B cell (primary cell): ENCODE measurements at regions of chr10 and their contacts with region 1.

Region 1: DNA sequence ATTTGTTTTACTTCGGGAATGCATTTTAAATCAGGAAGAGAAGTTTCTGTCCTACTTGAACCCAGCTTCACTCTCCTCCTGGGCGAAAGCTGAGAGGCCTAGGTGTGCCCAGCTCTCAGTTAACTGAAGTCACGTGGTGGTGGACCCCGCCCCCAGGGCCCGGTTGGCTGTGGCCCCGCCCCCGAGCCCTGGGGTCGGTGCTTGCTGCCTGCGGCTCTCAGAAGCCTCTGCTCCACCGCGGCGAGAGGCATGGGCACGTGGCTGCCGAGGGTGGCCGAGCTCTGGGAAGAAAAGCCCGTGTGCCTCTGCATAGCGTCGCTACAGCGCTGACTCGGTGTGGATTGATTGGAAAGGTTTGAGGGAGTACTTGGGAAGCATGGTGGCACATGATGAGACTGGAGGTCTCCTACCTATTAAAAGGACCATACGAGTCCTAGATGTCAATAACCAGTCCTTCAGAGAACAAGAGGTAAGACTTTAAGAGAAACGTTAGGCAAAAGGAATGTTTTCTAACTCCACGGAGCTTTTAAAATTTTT is 34.1 kb downstream of the NET1 start:
- DNase-seq: peak; percentile 89
- ATAC-seq: peak; percentile 96
- H3K4me3 ChIP-seq: peak overlapping the region; percentile 45 to 76 (median 62)
- H3K4me3 Mint-ChIP-seq: peak overlapping the region; percentile 91
- H3K27ac ChIP-seq: peak overlapping the region; percentile 30 to 44
- H3K27ac Mint-ChIP-seq: peak overlapping the region; percentile 87
- H3K4me1 ChIP-seq: peaks cover 20 to 21% of the 10 kb centered on the region in 2 donors
- H3K4me1 Mint-ChIP-seq: peaks cover 47% of the 10 kb centered on the region
- H3K27me3 ChIP-seq: no peaks in the 10 kb centered on the region
- H3K27me3 Mint-ChIP-seq: no peaks in the 10 kb centered on the region
- CTCF ChIP-seq: no peak

Region 2: GRCh38 chr10:5412277-5412941 is 34.0 kb before region 1 on chr10 and contains the start of gene NET1:
- CTCF ChIA-PET with region 1: no interaction called
- POLR2A ChIA-PET with region 1: no interaction called
- intact Hi-C with region 1: loop called (anchors 2 kb)
- DNase-seq: peak; percentile 75
- ATAC-seq: peak; percentile 84
- H3K4me3 ChIP-seq: peak within 1 kb of the TSS; percentile 51 to 78 (median 67)
- H3K4me3 Mint-ChIP-seq: peak within 1 kb of the TSS; percentile 90
- H3K27ac ChIP-seq: no peak within 1 kb of the TSS
- H3K27ac Mint-ChIP-seq: no peak within 1 kb of the TSS
- H3K4me1 ChIP-seq: peaks cover 8 to 9% of the 10 kb centered on the region in 2 donors
- H3K4me1 Mint-ChIP-seq: peaks cover 4% of the 10 kb centered on the region
- H3K27me3 ChIP-seq: peaks cover 0 to 16% (median 3%) of the 10 kb centered on the region in 4 experiments
- H3K27me3 Mint-ChIP-seq: peaks cover 17% of the 10 kb centered on the region
- CTCF ChIP-seq: no peak
- total RNA-seq, gene NET1: 6.4 and 7.6 TPM in 2 replicates

Region 3: GRCh38 chr10:5434017-5434753 is 12.3 kb before region 1 on chr10:
- CTCF ChIA-PET with region 1: interaction called, 28 read pairs
- POLR2A ChIA-PET with region 1: no interaction called
- intact Hi-C with region 1: no loop called
- DNase-seq: no peak
- ATAC-seq: no peak
- H3K4me3 ChIP-seq: no peak overlapping the region
- H3K4me3 Mint-ChIP-seq: no peak overlapping the region
- H3K27ac ChIP-seq: no peak overlapping the region
- H3K27ac Mint-ChIP-seq: no peak overlapping the region
- H3K4me1 ChIP-seq: no peaks in the 10 kb centered on the region
- H3K4me1 Mint-ChIP-seq: no peaks in the 10 kb centered on the region
- H3K27me3 ChIP-seq: no peaks in the 10 kb centered on the region
- H3K27me3 Mint-ChIP-seq: no peaks in the 10 kb centered on the region
- CTCF ChIP-seq: peak; percentile 46

Region 4: DNA sequence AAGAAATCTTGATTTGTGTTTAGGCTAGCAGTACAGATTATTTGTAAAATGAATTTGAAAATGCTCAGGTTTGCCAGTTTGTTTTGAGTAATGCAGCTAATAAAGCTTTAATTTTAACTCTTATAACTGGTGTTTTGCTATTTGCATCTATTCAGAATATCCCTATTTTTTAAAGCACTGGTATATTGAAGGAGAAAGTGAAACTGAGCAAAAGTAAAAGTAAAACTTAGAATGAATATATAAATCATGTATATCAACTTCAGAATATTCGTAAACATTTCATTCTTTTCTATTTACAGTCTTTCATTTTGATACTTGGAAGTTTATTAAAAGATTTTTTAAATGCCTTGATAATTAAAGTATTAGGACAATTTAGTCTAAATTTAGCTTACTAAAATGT is 264.4 kb after region 1 on chr10:
- CTCF ChIA-PET with region 1: interaction called, 3 read pairs
- POLR2A ChIA-PET with region 1: no interaction called
- intact Hi-C with region 1: loop called (anchors 1 kb)
- DNase-seq: no peak
- ATAC-seq: no peak
- H3K4me3 ChIP-seq: peak overlapping the region in 3 of 5 experiments; percentile 25 to 60 (median 26)
- H3K4me3 Mint-ChIP-seq: peak overlapping the region; percentile 17
- H3K27ac ChIP-seq: peak overlapping the region in 1 of 2 donors; percentile 43
- H3K27ac Mint-ChIP-seq: no peak overlapping the region
- H3K4me1 ChIP-seq: peaks cover 4 to 27% of the 10 kb centered on the region in 2 donors
- H3K4me1 Mint-ChIP-seq: peaks cover 51% of the 10 kb centered on the region
- H3K27me3 ChIP-seq: no peaks in the 10 kb centered on the region
- H3K27me3 Mint-ChIP-seq: no peaks in the 10 kb centered on the region
- CTCF ChIP-seq: no peak

Region 5: DNA sequence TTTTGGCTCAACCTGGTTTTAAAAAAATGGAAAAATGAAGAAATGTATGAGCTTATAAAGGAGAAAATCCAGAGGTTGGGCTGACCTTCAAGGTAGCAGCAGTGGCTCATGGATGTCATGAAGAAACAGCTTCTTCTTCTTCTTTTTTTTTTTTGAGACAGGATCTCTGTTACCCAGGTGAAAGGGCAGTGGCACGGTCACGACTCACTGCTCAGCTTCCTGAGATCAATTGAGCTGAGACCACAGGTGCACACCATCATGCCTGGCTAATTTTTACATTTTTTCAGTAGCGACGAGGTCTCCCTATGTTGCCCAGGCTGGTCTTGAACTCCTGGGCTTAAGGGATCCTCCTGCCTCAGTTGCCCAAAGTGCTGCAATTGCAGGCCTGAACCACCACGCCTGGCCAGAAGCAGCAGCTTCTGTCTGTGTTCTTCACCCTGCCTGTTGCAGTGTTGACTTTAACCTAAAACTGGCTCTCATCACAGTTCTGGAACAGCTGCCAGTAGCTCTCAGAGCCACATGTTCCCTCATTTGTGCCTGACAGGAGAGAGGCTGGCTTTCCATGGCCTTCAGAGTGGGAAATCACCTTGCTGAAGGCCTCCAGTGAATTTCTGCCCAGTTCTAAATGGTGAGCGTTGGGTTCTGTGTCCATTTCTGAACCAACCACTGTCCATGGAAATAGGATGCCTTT is 874.0 kb after region 1 on chr10:
- CTCF ChIA-PET with region 1: no interaction called
- POLR2A ChIA-PET with region 1: no interaction called
- intact Hi-C with region 1: loop called (anchors 10 kb)
- DNase-seq: peak; percentile 83
- ATAC-seq: peak; percentile 93
- H3K4me3 ChIP-seq: no peak overlapping the region
- H3K4me3 Mint-ChIP-seq: no peak overlapping the region
- H3K27ac ChIP-seq: no peak overlapping the region
- H3K27ac Mint-ChIP-seq: peak overlapping the region; percentile 84
- H3K4me1 ChIP-seq: peaks cover 38 to 51% of the 10 kb centered on the region in 2 donors
- H3K4me1 Mint-ChIP-seq: peaks cover 34% of the 10 kb centered on the region
- H3K27me3 ChIP-seq: no peaks in the 10 kb centered on the region
- H3K27me3 Mint-ChIP-seq: no peaks in the 10 kb centered on the region
- CTCF ChIP-seq: no peak